BJ (cell line): ENCODE measurements at regions of chr2 and their contacts with region 1.

Region 1: DNA sequence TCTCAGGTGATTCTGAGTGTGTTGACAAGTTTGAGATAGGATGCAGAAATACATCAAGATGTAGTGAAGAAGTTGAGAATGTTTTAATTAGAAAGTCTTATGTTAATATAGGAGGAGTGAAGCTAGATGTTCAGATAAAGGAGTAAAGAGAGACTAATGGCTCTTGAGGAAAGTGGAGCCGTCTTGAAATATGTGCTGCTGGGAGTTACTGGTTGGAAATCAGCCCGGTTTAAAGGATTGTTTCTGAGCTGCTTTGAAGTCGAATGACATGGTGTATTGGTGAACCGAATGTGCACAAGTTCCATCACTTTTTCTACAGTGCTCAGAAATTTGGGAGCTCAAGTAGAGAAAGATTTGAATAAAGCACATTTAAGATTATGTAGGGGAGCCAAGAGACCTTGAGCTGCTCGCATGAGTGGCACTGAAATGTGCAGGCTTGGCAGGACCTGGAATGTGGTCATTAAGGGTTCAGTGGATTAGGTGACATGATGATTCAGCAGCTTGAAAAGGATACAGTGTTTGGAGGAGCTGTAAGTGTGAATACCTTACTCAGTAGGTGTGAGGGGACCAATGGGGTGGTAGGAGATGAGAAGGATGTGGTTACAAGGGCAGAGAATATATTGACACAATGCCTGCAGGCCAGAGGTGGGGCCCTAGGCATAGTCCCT is 68.6 kb downstream of the CAB39 start:
- DNase-seq: no peak
- H3K4me3 ChIP-seq: no peak overlapping the region
- H3K27me3 ChIP-seq: no peaks in the 10 kb centered on the region
- CTCF ChIP-seq: no peak

Region 2: GRCh38 chr2:229753330-229753729 is 1027.9 kb before region 1 on chr2:
- CTCF ChIA-PET with region 1: no interaction called
- POLR2A ChIA-PET with region 1: interaction called, 16 read pairs
- DNase-seq: no peak
- H3K4me3 ChIP-seq: no peak overlapping the region
- H3K27me3 ChIP-seq: no peaks in the 10 kb centered on the region
- CTCF ChIP-seq: no peak

Region 3: DNA sequence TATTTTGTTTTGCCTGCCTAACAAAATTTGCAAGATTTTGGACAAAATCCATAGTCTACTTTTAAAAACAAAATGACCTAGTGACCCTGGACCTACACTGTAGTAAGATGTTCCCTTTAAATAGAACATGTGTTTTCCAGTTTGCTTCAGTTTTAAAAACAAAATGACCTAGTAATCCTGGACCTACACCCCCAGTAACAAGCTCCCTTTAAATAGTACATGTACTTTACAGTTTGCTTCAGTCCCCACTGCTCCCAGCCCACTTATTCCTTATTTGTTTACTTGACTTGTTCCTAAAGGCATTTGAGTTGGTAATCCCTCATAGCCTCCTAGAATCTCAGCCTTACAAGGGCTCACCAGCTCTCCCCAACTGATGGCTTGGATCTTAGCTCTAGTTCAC is 378.0 kb after region 1 on chr2:
- CTCF ChIA-PET with region 1: no interaction called
- POLR2A ChIA-PET with region 1: interaction called, 11 read pairs
- DNase-seq: no peak
- H3K4me3 ChIP-seq: no peak overlapping the region
- H3K27me3 ChIP-seq: no peaks in the 10 kb centered on the region
- CTCF ChIP-seq: no peak